Activated CD4-positive, alpha-beta memory T cell treated with anti-CD3 and anti-CD28 coated beads for 36 hours (primary cell): ENCODE measurements at regions of chr5 and their contacts with region 1.

Region 1: DNA sequence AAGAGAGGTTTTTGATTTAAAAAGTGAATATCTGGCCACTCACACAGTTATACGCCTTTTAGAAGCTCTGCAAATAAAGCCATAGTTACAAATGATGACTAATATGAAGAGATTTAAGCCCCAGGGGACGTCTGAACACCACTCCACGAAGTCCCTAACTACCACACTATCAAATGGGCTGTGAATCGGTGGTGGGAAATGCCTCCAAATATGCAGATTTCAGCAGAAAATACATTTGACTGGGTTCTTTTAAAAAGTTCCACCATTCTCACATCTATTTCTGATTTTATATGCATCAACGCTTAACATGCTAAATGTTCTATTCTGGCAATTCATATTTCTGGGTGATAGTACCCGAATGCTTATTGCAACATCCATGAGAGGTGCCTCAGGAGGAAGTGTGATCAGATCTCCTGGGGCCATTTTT is 22.5 kb downstream of the TICAM2 start:
- DNase-seq: no peak
- H3K4me3 Mint-ChIP-seq: no peak overlapping the region
- H3K27ac Mint-ChIP-seq: no peak overlapping the region
- H3K4me1 Mint-ChIP-seq: no peaks in the 10 kb centered on the region
- H3K27me3 Mint-ChIP-seq: no peaks in the 10 kb centered on the region

Region 2: GRCh38 chr5:115377468-115378217 is 202.1 kb before region 1 on chr5:
- CTCF ChIA-PET with region 1: interaction called, 8 read pairs
- POLR2A ChIA-PET with region 1: no interaction called
- intact Hi-C with region 1: loop called (anchors 10 kb)
- DNase-seq: no peak
- H3K4me3 Mint-ChIP-seq: no peak overlapping the region
- H3K27ac Mint-ChIP-seq: no peak overlapping the region
- H3K4me1 Mint-ChIP-seq: peaks cover 17% of the 10 kb centered on the region
- H3K27me3 Mint-ChIP-seq: peaks cover 3% of the 10 kb centered on the region